HepG2 (cell line): ENCODE measurements at regions of chr6 and their contacts with region 1.

Region 1: GRCh38 chr6:112780498-112781096 is 433.5 kb downstream of the RFPL4B start:
- DNase-seq: peak; percentile 76
- ATAC-seq: peak; percentile 98
- H3K4me3 ChIP-seq: no peak overlapping the region
- H3K27ac ChIP-seq: no peak overlapping the region
- H3K4me1 ChIP-seq: no peaks in the 10 kb centered on the region
- H3K27me3 ChIP-seq: no peaks in the 10 kb centered on the region
- CTCF ChIP-seq: peak; percentile 85
- EP300 ChIP-seq: no peak
- POLR2A ChIP-seq: no peak
- RAD21 ChIP-seq: peak; percentile 69

Region 2: GRCh38 chr6:112879920-112880413 is 99.4 kb after region 1 on chr6:
- CTCF ChIA-PET with region 1: no interaction called
- POLR2A ChIA-PET with region 1: no interaction called
- in situ Hi-C with region 1: no loop called
- intact Hi-C with region 1: loop called (anchors 2 kb)
- DNase-seq: peak; percentile 85
- ATAC-seq: peak; percentile 100
- H3K4me3 ChIP-seq: peak overlapping the region; percentile 57 to 79 (median 79)
- H3K27ac ChIP-seq: no peak overlapping the region
- H3K4me1 ChIP-seq: 0 out of 2 replicates have a peak, but pooled peaks cover 6% of the 10 kb centered on the region
- H3K27me3 ChIP-seq: no peaks in the 10 kb centered on the region; a peak in 1 of 5 replicates
- CTCF ChIP-seq: peak; percentile 99
- EP300 ChIP-seq: no peak
- POLR2A ChIP-seq: peak; percentile 30 to 73; a peak in 2 of 4 replicates
- RAD21 ChIP-seq: peak; percentile 97

Region 3: GRCh38 chr6:113089056-113089455 is 308.5 kb after region 1 on chr6:
- CTCF ChIA-PET with region 1: no interaction called
- POLR2A ChIA-PET with region 1: no interaction called
- in situ Hi-C with region 1: no loop called
- intact Hi-C with region 1: loop called (anchors 1 kb)
- DNase-seq: peak; percentile 9
- ATAC-seq: peak; percentile 84
- H3K4me3 ChIP-seq: no peak overlapping the region
- H3K27ac ChIP-seq: no peak overlapping the region
- H3K4me1 ChIP-seq: no peaks in the 10 kb centered on the region
- H3K27me3 ChIP-seq: no peaks in the 10 kb centered on the region
- CTCF ChIP-seq: peak; percentile 41
- EP300 ChIP-seq: no peak
- POLR2A ChIP-seq: no peak
- RAD21 ChIP-seq: 0 out of 2 replicates have a peak, but pooled peaks have one; percentile 27

Region 4: DNA sequence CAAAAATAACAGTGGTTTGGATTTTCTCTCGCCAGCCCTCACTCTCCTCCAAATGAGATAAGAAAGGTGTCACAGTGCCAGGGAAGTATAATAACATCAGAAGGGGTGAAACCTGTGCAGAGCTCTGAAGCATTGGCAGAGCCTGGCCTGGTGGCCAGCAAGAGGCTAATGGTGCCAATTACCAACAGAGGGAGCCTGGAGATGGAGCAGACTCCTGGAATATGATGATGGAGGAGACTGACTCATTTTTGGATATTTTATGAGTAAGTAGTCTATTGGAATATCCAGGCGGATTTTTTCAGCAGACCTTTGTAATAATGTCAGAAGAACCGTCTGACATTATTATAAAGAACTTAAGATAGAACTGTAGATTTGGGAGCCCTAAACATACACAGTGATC is 633.9 kb after region 1 on chr6:
- CTCF ChIA-PET with region 1: no interaction called
- POLR2A ChIA-PET with region 1: no interaction called
- in situ Hi-C with region 1: loop called (anchors 25 kb)
- intact Hi-C with region 1: no loop called
- DNase-seq: peak; percentile 40
- ATAC-seq: peak; percentile 92
- H3K4me3 ChIP-seq: no peak overlapping the region
- H3K27ac ChIP-seq: no peak overlapping the region
- H3K4me1 ChIP-seq: no peaks in the 10 kb centered on the region
- H3K27me3 ChIP-seq: no peaks in the 10 kb centered on the region
- CTCF ChIP-seq: peak; percentile 58
- EP300 ChIP-seq: no peak
- POLR2A ChIP-seq: no peak
- RAD21 ChIP-seq: peak; percentile 48

Region 5: GRCh38 chr6:113879186-113880096 is 1098.8 kb after region 1 on chr6:
- CTCF ChIA-PET with region 1: interaction called, 5 read pairs
- POLR2A ChIA-PET with region 1: no interaction called
- in situ Hi-C with region 1: no loop called
- intact Hi-C with region 1: loop called (anchors 1 kb)
- DNase-seq: peak; percentile 67
- ATAC-seq: peak; percentile 100
- H3K4me3 ChIP-seq: no peak overlapping the region
- H3K27ac ChIP-seq: no peak overlapping the region
- H3K4me1 ChIP-seq: peaks cover 13% of the 10 kb centered on the region
- H3K27me3 ChIP-seq: no peaks in the 10 kb centered on the region; a peak in 1 of 5 replicates
- CTCF ChIP-seq: peak; percentile 87
- EP300 ChIP-seq: no peak
- POLR2A ChIP-seq: no peak
- RAD21 ChIP-seq: peak; percentile 77

Region 6: DNA sequence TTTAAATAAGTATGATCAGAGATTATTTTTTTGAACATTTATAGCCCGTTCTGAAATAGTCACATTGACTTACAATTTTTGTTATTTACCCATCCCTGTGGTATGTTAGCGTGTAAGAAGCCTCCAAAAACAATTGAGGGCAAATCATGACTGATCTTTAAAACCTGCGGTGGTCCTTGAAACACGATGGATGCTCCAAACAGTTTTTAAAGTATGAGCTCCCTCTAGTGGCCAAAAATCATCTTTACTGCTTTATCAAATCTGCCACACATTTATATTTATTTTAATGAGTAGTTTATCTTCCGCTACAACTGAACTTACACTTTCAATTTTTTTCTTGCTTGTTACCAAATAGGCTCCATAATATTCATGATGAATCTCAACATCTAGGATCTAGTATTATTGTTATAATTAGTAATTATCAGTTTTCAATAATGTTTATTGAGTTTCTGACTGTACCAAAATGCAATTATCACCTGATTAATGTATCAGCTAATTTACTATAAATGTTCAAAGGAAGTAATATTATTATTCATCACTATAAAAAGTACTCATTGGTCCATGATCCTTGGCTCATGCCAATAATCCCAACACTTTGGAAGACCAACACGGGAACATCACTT is 1128.7 kb after region 1 on chr6:
- CTCF ChIA-PET with region 1: interaction called, 11 read pairs
- POLR2A ChIA-PET with region 1: no interaction called
- in situ Hi-C with region 1: loop called (anchors 5 kb)
- intact Hi-C with region 1: loop called (anchors 1 kb)
- DNase-seq: peak; percentile 45
- ATAC-seq: peak; percentile 44; the same call in 2 of the 3 replicates
- H3K4me3 ChIP-seq: no peak overlapping the region
- H3K27ac ChIP-seq: no peak overlapping the region
- H3K4me1 ChIP-seq: peaks cover 2% of the 10 kb centered on the region
- H3K27me3 ChIP-seq: peaks cover 0 to 6% of the 10 kb centered on the region in 2 experiments; a peak in 2 of 5 replicates
- CTCF ChIP-seq: peak; percentile 63
- EP300 ChIP-seq: no peak
- POLR2A ChIP-seq: no peak
- RAD21 ChIP-seq: 0 out of 2 replicates have a peak, but pooled peaks have one; percentile 20

Region 7: GRCh38 chr6:113936093-113936934 is 1155.7 kb after region 1 on chr6:
- CTCF ChIA-PET with region 1: interaction called, 12 read pairs
- POLR2A ChIA-PET with region 1: no interaction called
- in situ Hi-C with region 1: no loop called
- intact Hi-C with region 1: loop called (anchors 1 kb)
- DNase-seq: peak; percentile 50
- ATAC-seq: peak; percentile 80
- H3K4me3 ChIP-seq: no peak overlapping the region
- H3K27ac ChIP-seq: no peak overlapping the region
- H3K4me1 ChIP-seq: no peaks in the 10 kb centered on the region
- H3K27me3 ChIP-seq: no peaks in the 10 kb centered on the region
- CTCF ChIP-seq: peak; percentile 58
- EP300 ChIP-seq: no peak
- POLR2A ChIP-seq: no peak
- RAD21 ChIP-seq: no peak